ENCODE measurements at regions of chr10 and their contacts with region 1.

Region 1: DNA sequence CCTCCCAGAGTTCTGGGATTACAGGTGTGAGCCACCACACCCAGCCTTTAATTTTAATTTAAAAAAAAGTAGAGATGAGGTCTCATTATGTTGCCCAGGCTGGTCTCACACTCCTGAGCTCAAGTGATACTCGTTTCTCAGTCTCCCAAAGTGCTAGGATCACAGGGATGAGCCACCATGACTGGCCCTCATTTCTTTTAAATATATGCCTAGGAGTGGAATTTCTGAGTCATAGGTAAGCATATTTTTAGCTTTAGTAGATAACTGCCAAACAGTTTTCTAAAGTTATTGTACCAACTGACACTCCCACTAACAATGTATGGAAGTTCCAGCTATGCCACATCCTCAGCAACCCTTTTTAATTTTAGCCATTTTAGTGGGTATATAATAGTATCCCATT is 13.8 kb upstream of the PPIF start:
- DNase-seq: no peak
- H3K4me3 ChIP-seq: no peak overlapping the region
- H3K27ac ChIP-seq: no peak overlapping the region
- H3K4me1 ChIP-seq: peaks cover 0 to 11% (median 0%) of the 10 kb centered on the region in 4 experiments; a peak in 3 of 7 replicates
- H3K27me3 ChIP-seq: no peaks in the 10 kb centered on the region
- CTCF ChIP-seq: no peak
- EP300 ChIP-seq: no peak
- POLR2A ChIP-seq: no peak
- RAD21 ChIP-seq: no peak

Region 2: DNA sequence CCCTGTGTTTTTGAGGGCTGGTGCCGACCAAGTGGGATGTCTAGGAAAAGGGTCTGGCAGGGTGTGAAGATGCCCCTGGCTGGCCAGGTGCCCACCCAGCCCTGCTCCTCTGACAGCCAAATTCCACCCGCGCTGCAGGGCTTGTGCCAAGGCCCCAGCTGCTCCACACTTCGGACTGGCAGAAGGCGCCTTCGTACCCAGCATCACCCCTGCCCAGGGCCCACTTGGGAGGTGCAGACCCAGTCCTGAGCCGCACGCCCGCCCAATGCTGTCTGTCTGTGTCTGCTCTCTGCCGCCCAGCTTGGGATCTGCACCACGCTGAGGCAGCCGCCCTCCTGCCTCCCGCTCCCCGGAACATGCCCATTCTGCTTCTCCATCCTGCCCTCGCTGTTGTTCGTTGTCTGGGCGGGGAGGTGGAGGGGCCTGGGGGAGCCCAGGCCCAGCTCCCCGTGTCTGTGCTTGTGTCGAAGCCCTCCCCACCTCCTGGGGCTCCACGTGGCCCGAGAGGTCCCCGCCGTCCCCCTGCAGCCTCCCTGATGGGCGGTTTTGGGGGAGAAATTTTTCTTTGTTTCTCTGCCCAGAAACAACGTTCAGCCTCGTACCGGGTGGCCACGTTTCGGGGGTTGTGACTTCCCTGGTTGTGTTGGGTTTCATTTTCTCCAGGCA is 23.1 kb before region 1 on chr10:
- CTCF ChIA-PET with region 1: no interaction called
- POLR2A ChIA-PET with region 1: no interaction called
- DNase-seq: no peak
- H3K4me3 ChIP-seq: no peak overlapping the region
- H3K27ac ChIP-seq: no peak overlapping the region
- H3K4me1 ChIP-seq: peaks cover 0 to 2% (median 0%) of the 10 kb centered on the region in 4 experiments; a peak in 1 of 7 replicates
- H3K27me3 ChIP-seq: no peaks in the 10 kb centered on the region
- CTCF ChIP-seq: no peak
- EP300 ChIP-seq: no peak
- POLR2A ChIP-seq: no peak
- RAD21 ChIP-seq: no peak

Region 3: GRCh38 chr10:79322616-79323543 is 10.6 kb before region 1 on chr10:
- CTCF ChIA-PET with region 1: interaction called, 13 read pairs
- POLR2A ChIA-PET with region 1: interaction called, 3 read pairs
- DNase-seq: no peak
- H3K4me3 ChIP-seq: no peak overlapping the region
- H3K27ac ChIP-seq: no peak overlapping the region
- H3K4me1 ChIP-seq: peaks cover 2 to 11% (median 6%) of the 10 kb centered on the region in 4 experiments
- H3K27me3 ChIP-seq: no peaks in the 10 kb centered on the region
- CTCF ChIP-seq: no peak
- EP300 ChIP-seq: no peak
- POLR2A ChIP-seq: no peak
- RAD21 ChIP-seq: no peak

Region 4: GRCh38 chr10:79502561-79503309 is 169.3 kb after region 1 on chr10:
- CTCF ChIA-PET with region 1: no interaction called
- POLR2A ChIA-PET with region 1: no interaction called
- DNase-seq: peak; percentile 29 to 78
- H3K4me3 ChIP-seq: no peak overlapping the region
- H3K27ac ChIP-seq: no peak overlapping the region
- H3K4me1 ChIP-seq: no peaks in the 10 kb centered on the region
- H3K27me3 ChIP-seq: no peaks in the 10 kb centered on the region; a peak in 3 of 7 replicates
- CTCF ChIP-seq: peak; percentile 66 to 75 (median 71)
- EP300 ChIP-seq: no peak
- POLR2A ChIP-seq: no peak
- RAD21 ChIP-seq: peak; percentile 72 to 74